Naive thymus-derived CD4-positive, alpha-beta T cell (primary cell): ENCODE measurements at regions of chr3 and their contacts with region 1.

Region 1: DNA sequence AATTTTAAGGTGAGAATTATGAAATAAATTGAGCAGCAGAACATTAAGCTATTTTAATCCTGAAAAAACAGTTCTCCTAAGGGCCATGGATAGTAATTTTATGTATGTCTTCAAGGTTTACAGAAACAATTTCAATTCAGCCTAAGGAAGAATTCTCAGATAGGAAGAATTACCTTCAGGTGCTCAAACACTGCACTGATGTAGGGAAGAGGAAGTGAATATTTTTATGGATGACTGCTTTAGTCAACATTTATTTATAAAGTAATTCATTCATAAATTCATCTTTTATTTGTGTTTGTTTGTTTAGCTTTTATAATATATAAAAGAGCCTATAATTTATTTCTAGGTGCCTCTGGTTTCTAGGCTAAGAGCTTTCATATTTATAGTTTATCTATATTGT is 620.7 kb downstream of the NAALADL2 start:
- DNase-seq: no peak
- ATAC-seq: no peak
- H3K4me3 ChIP-seq: no peak overlapping the region
- H3K4me3 Mint-ChIP-seq: no peak overlapping the region
- H3K27ac ChIP-seq: no peak overlapping the region
- H3K27ac Mint-ChIP-seq: no peak overlapping the region
- H3K4me1 ChIP-seq: no peaks in the 10 kb centered on the region
- H3K4me1 Mint-ChIP-seq: no peaks in the 10 kb centered on the region
- H3K27me3 ChIP-seq: no peaks in the 10 kb centered on the region
- H3K27me3 Mint-ChIP-seq: no peaks in the 10 kb centered on the region

Region 2: DNA sequence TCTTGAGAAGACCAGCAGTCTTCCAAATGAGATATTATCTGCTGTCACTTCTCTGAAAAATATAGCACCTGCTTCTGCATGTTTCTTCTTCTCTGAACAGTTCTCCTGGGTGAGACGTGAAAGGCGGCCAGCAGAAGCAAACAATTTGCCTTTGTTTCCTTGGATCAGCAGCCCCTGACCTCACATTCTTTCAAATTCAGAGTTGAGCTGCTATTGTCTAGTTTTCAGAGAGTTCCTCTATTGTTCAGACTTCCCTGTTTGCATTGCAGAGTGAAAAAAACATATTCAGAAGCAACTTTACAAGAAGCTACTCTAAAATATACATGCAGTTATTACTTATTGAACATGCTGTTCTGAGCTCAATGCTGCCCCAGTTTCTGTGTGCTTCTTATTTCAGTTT is 32.9 kb after region 1 on chr3:
- CTCF ChIA-PET with region 1: no interaction called
- POLR2A ChIA-PET with region 1: no interaction called
- intact Hi-C with region 1: loop called in 1 of 2 experiments (anchors 1 kb)
- DNase-seq: no peak
- ATAC-seq: no peak
- H3K4me3 ChIP-seq: no peak overlapping the region
- H3K4me3 Mint-ChIP-seq: no peak overlapping the region
- H3K27ac ChIP-seq: no peak overlapping the region
- H3K27ac Mint-ChIP-seq: no peak overlapping the region
- H3K4me1 ChIP-seq: no peaks in the 10 kb centered on the region
- H3K4me1 Mint-ChIP-seq: no peaks in the 10 kb centered on the region
- H3K27me3 ChIP-seq: no peaks in the 10 kb centered on the region
- H3K27me3 Mint-ChIP-seq: no peaks in the 10 kb centered on the region